ENCODE measurements at regions of chr11 and their contacts with region 1.

Region 1: DNA sequence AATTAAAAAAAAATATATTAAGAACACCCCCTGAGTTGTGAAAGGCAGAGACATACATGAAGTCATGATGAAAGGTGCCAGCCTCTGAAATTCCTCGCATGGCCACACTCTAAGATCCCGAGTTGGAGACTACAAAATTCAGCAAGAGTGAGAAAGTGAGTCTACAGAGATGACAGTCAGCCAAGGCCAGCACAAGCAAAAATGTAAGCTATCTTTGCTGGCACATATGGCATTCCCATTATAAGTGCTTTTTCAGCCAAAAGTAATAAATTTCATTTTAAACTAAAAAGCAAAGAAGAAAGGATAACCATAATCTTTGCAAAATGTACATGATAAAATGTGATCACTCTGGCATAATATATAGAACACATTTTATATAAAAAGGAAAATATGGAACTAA is 40.6 kb downstream of the FANCF start:
- DNase-seq: no peak

Region 2: GRCh38 chr11:22539821-22540256 is 45.1 kb before region 1 on chr11:
- intact Hi-C with region 1: no loop called
- DNase-seq: no peak

Region 3: GRCh38 chr11:24043842-24044241 is 1458.9 kb after region 1 on chr11:
- intact Hi-C with region 1: loop called in 1 of 2 experiments (anchors 5 kb)
- DNase-seq: no peak